ENCODE measurements at regions of chr6 and their contacts with region 1.

Region 1: GRCh38 chr6:132813173-132813856 is 1.1 kb upstream of the RPS12 start:
- DNase-seq: peak; percentile 67
- H3K4me3 Mint-ChIP-seq: peak overlapping the region; percentile 96
- H3K27ac Mint-ChIP-seq: peak overlapping the region; percentile 99
- H3K4me1 Mint-ChIP-seq: peaks cover 25% of the 10 kb centered on the region
- H3K27me3 Mint-ChIP-seq: no peaks in the 10 kb centered on the region
- CTCF ChIP-seq: no peak

Region 2: GRCh38 chr6:132530293-132530974 is 282.9 kb before region 1 on chr6:
- CTCF ChIA-PET with region 1: interaction called, 8 read pairs
- POLR2A ChIA-PET with region 1: interaction called, 5 read pairs
- intact Hi-C with region 1: loop called (anchors 5 kb)
- DNase-seq: peak; percentile 78
- H3K4me3 Mint-ChIP-seq: no peak overlapping the region
- H3K27ac Mint-ChIP-seq: no peak overlapping the region
- H3K4me1 Mint-ChIP-seq: no peaks in the 10 kb centered on the region
- H3K27me3 Mint-ChIP-seq: no peaks in the 10 kb centered on the region
- CTCF ChIP-seq: peak; percentile 62

Region 3: GRCh38 chr6:132669690-132670291 is 143.5 kb before region 1 on chr6:
- CTCF ChIA-PET with region 1: interaction called, 7 read pairs
- POLR2A ChIA-PET with region 1: interaction called, 10 read pairs
- intact Hi-C with region 1: no loop called
- DNase-seq: peak; percentile 51
- H3K4me3 Mint-ChIP-seq: no peak overlapping the region
- H3K27ac Mint-ChIP-seq: no peak overlapping the region
- H3K4me1 Mint-ChIP-seq: peaks cover 7% of the 10 kb centered on the region
- H3K27me3 Mint-ChIP-seq: no peaks in the 10 kb centered on the region
- CTCF ChIP-seq: peak; percentile 54

Region 4: DNA sequence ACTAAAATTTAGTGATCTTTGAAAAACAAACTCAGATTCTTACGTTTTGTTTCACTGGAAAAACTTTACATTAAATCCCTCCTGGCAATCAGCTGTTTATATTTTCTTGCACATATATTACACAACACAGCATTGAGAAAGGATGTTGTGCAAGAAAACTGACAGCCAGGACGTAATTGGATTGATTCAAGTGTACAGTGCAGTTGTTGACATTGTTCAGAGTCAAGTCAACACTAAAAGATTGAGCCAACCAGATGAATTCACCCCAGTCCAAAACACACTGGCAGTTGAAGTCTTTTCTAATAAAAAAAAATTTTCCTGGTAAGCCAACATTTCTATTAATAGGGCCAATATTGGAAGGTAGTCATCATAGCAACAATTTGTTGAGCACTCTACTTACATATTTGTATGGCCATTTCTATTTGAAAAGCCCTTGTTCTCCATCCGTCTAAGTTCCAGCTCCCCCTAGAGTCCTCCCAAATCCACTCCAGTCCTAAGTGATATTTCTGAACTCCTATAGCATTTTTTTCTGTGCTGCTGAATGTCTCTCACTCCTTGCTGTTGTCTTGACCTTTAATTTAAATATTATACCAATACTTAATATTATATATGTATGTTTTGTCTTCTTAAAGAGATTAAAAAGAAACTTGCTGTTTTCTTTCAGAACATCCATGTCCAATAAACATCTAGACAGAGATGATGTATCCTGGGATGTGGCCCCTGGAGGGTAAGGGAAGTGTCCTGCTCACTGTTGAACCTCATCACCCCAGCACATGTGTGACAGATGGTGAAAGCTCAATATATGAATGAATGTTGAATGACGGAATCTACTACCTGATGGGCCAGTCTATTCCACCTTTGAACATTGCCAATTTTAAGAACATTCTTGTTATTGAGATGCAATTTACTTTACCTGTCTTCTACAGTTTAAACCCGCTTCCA is 78.3 kb before region 1 on chr6:
- CTCF ChIA-PET with region 1: interaction called, 3 read pairs
- POLR2A ChIA-PET with region 1: interaction called, 52 read pairs
- intact Hi-C with region 1: no loop called
- DNase-seq: peak; percentile 94
- H3K4me3 Mint-ChIP-seq: peak overlapping the region; percentile 59
- H3K27ac Mint-ChIP-seq: peak overlapping the region; percentile 86
- H3K4me1 Mint-ChIP-seq: peaks cover 38% of the 10 kb centered on the region
- H3K27me3 Mint-ChIP-seq: no peaks in the 10 kb centered on the region
- CTCF ChIP-seq: peak; percentile 15

Region 5: DNA sequence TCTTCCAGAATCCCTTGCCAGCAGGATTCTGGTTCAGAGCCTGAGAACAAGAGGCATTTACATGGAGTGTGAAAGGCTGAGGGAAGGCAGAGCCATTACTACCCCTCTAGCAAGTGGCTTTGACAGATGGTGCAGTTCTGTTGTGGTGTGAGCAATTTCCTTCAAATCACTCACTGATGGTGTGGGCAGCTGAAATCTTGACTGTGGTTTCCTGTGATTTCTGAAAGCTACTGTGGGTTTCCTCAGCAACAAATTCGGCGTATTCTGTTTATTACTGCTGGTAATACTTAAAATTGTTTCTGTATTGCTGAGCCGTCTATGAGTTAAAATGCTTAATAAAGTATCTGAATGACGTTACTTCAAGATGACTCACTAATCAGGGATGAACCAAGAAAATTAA is 894.1 kb after region 1 on chr6:
- CTCF ChIA-PET with region 1: no interaction called
- POLR2A ChIA-PET with region 1: no interaction called
- intact Hi-C with region 1: loop called (anchors 10 kb)
- DNase-seq: peak; percentile 28
- H3K4me3 Mint-ChIP-seq: no peak overlapping the region
- H3K27ac Mint-ChIP-seq: peak overlapping the region; percentile 69
- H3K4me1 Mint-ChIP-seq: peaks cover 35% of the 10 kb centered on the region
- H3K27me3 Mint-ChIP-seq: no peaks in the 10 kb centered on the region
- CTCF ChIP-seq: no peak

Measured in MCF 10A (cell line).